ENCODE measurements at regions of chr5 and their contacts with region 1.

Region 1: DNA sequence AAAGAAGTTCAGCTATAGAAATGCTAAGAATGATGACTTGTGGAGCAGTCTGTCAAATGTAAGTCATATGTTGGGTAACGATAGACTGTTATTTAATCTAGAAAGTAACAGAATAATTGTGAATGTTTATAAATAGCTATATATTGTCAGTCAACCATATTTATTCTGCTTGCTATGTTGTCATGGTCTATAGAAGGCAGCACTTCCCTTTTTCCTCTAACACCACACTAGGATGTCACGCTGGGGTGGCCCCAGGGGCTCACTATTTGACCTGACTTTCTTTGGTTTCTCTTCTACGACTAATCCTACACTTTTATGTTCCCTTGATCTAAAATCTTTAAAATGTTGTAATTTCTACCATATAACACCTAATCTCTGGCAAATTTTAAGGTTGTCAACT is 20.5 kb downstream of the ERAP2 start:
- DNase-seq: peak in 2 of 35 experiments; percentile 19 to 28
- ATAC-seq: peak in 1 of 4 experiments; percentile 43
- H3K4me3 ChIP-seq: peak overlapping the region; percentile 22 to 23
- H3K4me3 Mint-ChIP-seq: peak overlapping the region; percentile 60 to 78 (median 74)
- H3K27ac ChIP-seq: peak overlapping the region; percentile 66
- H3K27ac Mint-ChIP-seq: peak overlapping the region; percentile 88 to 91
- H3K4me1 ChIP-seq: peaks cover 3 to 18% of the 10 kb centered on the region in 2 experiments
- H3K4me1 Mint-ChIP-seq: peaks cover 57 to 82% (median 58%) of the 10 kb centered on the region in 3 donors
- H3K27me3 ChIP-seq: no peaks in the 10 kb centered on the region
- H3K27me3 Mint-ChIP-seq: no peaks in the 10 kb centered on the region

Region 2: GRCh38 chr5:96876292-96876850 is 20.4 kb before region 1 on chr5 and contains the start of gene ERAP2:
- CTCF ChIA-PET with region 1: interaction called, 6 to 7 read pairs
- POLR2A ChIA-PET with region 1: interaction called in 1 of 2 experiments, 11 read pairs
- DNase-seq: peak in 8 of 35 experiments; percentile 9 to 76 (median 20)
- ATAC-seq: peak; percentile 72 to 80 (median 78)
- H3K4me3 ChIP-seq: peak within 1 kb of the TSS; percentile 78 to 87
- H3K4me3 Mint-ChIP-seq: peak within 1 kb of the TSS; percentile 92 to 99 (median 96)
- H3K27ac ChIP-seq: peak within 1 kb of the TSS; percentile 87
- H3K27ac Mint-ChIP-seq: peak within 1 kb of the TSS; percentile 97 to 99
- H3K4me1 ChIP-seq: peaks cover 46 to 50% of the 10 kb centered on the region in 2 experiments
- H3K4me1 Mint-ChIP-seq: peaks cover 73 to 78% (median 75%) of the 10 kb centered on the region in 3 donors
- H3K27me3 ChIP-seq: no peaks in the 10 kb centered on the region
- H3K27me3 Mint-ChIP-seq: no peaks in the 10 kb centered on the region
- total RNA-seq, gene ERAP2: 40.4 to 162 (median 71.6) TPM

Region 3: GRCh38 chr5:96934708-96935558 is 38.1 kb after region 1 on chr5:
- CTCF ChIA-PET with region 1: interaction called in 1 of 2 experiments, 10 read pairs
- POLR2A ChIA-PET with region 1: interaction called, 4 read pairs
- DNase-seq: peak; percentile 90 to 98 (median 94)
- ATAC-seq: peak; percentile 73 to 78 (median 76)
- H3K4me3 ChIP-seq: peak overlapping the region; percentile 94 to 98
- H3K4me3 Mint-ChIP-seq: peak overlapping the region; percentile 89 to 94 (median 90)
- H3K27ac ChIP-seq: peak overlapping the region; percentile 94
- H3K27ac Mint-ChIP-seq: peak overlapping the region; percentile 96 to 100
- H3K4me1 ChIP-seq: peaks cover 21 to 53% of the 10 kb centered on the region in 2 experiments
- H3K4me1 Mint-ChIP-seq: peaks cover 70 to 72% (median 71%) of the 10 kb centered on the region in 3 donors
- H3K27me3 ChIP-seq: no peaks in the 10 kb centered on the region
- H3K27me3 Mint-ChIP-seq: no peaks in the 10 kb centered on the region

Region 4: DNA sequence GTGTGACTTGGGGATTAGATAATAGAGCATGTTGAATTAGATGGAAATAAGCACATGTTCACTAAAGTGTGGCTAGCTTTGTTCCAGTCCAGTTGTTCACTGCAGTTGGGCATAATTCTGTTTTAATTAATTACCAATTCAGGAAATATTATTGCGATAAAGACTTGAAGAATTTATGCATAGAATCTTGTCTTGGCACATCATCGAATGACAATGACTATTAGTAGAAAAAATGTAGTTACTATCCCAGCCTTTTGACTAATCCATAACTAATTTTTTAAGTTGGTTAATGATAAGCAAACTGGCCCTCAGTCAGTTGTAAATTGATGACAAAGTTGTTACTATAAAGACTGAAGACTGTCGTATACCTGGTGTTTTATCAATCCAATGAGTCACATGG is 49.6 kb after region 1 on chr5:
- CTCF ChIA-PET with region 1: no interaction called
- POLR2A ChIA-PET with region 1: no interaction called
- DNase-seq: no peak
- ATAC-seq: no peak
- H3K4me3 ChIP-seq: no peak overlapping the region
- H3K4me3 Mint-ChIP-seq: peak overlapping the region in 1 of 3 donors; percentile 25
- H3K27ac ChIP-seq: no peak overlapping the region
- H3K27ac Mint-ChIP-seq: peak overlapping the region; percentile 62 to 70
- H3K4me1 ChIP-seq: peaks cover 25 to 40% of the 10 kb centered on the region in 2 experiments
- H3K4me1 Mint-ChIP-seq: peaks cover 90% of the 10 kb centered on the region in 3 donors
- H3K27me3 ChIP-seq: no peaks in the 10 kb centered on the region
- H3K27me3 Mint-ChIP-seq: no peaks in the 10 kb centered on the region